ENCODE measurements at regions of chr2 and their contacts with region 1.

Region 1: GRCh38 chr2:46887028-46887885 is 28.3 kb downstream of the MCFD2 start:
- DNase-seq: no peak
- ATAC-seq: no peak

Region 2: DNA sequence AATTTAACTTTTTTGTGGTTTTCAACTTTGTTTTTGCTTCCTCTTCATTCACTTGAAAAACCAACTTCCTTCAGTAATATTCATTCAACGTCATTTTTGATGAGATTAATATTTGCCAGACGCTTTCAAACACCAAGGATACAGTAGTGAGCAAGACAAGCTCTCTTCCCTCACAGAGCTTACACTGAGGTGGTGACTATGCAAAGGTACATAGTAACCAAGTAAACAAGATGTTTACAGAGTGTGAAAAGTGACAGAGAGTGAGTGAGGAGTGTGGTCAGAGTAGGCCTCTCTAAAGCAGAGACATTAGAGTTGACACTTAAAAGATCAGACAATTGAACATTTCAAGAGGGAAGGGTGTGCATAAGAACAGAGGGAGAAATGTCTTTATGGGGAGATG is 252.4 kb before region 1 on chr2:
- intact Hi-C with region 1: loop called (anchors 2 kb)
- DNase-seq: no peak
- ATAC-seq: no peak

Region 3: GRCh38 chr2:46650556-46651001 is 236.7 kb before region 1 on chr2:
- intact Hi-C with region 1: loop called (anchors 5 kb)
- DNase-seq: no peak
- ATAC-seq: peak; percentile 69

Region 4: DNA sequence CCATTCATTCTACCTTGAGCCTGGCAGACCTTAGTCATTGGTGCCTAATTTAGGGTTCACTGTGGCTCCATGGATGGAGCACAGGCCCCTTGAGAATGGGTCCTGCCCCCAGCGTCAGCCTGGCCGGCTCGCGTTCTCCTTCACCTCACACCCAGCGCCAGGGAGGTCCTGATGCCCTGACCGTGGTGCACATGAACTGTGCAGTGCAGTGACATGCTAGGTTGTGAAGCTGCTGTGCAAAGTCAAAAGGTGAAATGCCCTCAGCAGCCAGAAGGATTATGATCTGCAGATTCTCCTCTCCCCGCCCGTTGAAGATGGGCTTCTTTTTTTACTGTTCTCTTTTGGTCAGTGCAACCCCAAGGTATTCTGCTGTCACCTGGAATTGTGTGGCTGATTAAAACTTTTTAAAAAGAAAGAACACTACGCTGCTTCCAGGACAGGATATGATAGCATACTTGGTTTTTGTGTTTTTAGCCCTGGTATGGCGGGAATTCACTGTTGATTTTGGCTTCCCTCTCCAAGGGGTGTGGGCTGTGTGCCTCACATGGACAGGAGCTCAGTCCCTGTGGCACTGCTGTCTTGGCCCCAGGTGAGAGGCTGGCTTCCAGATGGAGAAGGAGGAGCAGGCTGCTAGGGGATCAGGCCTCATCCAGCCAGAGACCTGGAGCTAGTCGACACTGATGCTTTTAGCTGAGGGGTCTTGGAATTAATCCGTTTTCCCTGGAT is 77.7 kb after region 1 on chr2:
- intact Hi-C with region 1: no loop called
- DNase-seq: no peak
- ATAC-seq: no peak

Region 5: GRCh38 chr2:47016172-47016913 is 129.1 kb after region 1 on chr2:
- intact Hi-C with region 1: no loop called
- DNase-seq: peak; percentile 44
- ATAC-seq: peak; percentile 31

Region 6: GRCh38 chr2:47083886-47084687 is 196.8 kb after region 1 on chr2:
- intact Hi-C with region 1: no loop called
- DNase-seq: no peak
- ATAC-seq: peak; percentile 36

Measured in Right ventricle myocardium inferior (tissue), 1 donor.